ENCODE measurements at regions of chr1 and their contacts with region 1.

Region 1: GRCh38 chr1:151294742-151295462 is 12.8 kb downstream of the ZNF687 start:
- DNase-seq: no peak
- ATAC-seq: no peak

Region 2: GRCh38 chr1:151340870-151341754 is 46.2 kb after region 1 on chr1:
- intact Hi-C with region 1: loop called (anchors 2 to 5 kb)
- DNase-seq: peak in 1 of 2 donors; percentile 41
- ATAC-seq: peak; percentile 91

Region 3: DNA sequence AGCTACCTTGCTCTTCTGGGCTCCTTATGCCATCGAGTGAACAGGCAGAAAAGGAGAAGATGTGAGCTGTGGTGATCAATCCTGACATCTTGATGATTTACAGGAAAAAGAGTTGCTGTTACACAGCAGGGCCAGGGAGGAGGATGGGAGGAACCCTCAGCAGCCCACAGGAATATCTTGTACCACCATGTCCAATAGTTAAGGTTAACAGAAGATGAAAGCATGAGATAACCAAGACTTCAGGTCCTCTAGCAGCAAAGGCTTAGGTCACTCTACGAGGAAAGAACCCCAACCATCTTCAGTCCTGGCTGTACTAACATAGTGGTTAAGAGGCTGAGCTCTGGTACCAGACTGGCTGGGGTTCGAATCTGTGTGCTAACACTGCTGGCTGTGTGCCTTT is 89.7 kb after region 1 on chr1:
- intact Hi-C with region 1: no loop called
- DNase-seq: no peak
- ATAC-seq: no peak